ENCODE measurements at regions of chr12 and their contacts with region 1.

Region 1: DNA sequence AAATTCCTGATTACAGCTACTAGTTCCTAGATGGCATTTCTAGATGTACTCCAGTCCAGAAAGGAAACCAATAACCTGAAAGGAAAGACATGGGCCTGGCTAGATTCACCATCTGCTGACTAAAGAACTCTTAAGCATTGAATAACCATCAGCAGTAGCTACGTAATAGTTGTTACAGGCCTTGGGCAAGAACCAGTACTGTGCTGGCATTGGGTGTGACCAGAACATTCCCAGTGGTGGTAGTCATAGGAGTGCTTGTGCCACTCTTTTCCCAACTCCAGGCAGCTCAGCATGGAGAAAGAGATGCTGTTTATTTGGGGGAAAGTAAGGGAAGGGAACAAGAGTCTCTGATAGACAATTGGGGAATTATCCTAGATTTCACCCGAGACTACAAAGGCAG is 333.3 kb downstream of the SLC16A7 start:
- DNase-seq: peak; percentile 92
- H3K4me3 Mint-ChIP-seq: peak overlapping the region; percentile 50
- H3K27ac Mint-ChIP-seq: peak overlapping the region; percentile 95
- H3K4me1 Mint-ChIP-seq: peaks cover 33% of the 10 kb centered on the region
- H3K27me3 Mint-ChIP-seq: no peaks in the 10 kb centered on the region
- CTCF ChIP-seq: no peak

Region 2: DNA sequence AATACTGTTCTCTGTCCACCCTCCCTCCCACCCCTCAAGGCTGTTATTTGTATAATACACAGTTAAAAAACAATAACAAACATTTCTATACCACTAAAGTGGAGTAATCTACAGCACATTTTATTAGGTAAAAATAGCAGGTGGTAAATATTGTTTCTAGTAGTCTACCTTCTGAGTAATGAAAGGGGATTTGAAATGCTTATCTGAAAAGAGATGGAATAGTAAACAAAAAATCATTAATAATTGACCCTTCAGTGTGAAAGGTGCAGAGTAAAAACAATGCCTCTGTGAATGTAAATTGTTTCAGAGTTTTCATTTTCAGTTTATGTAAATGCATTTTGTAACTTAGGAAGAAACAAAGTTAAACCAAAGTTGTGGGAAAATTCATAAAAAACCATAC is 12.1 kb before region 1 on chr12:
- CTCF ChIA-PET with region 1: no interaction called
- POLR2A ChIA-PET with region 1: interaction called, 12 read pairs
- intact Hi-C with region 1: no loop called
- DNase-seq: no peak
- H3K4me3 Mint-ChIP-seq: no peak overlapping the region
- H3K27ac Mint-ChIP-seq: no peak overlapping the region
- H3K4me1 Mint-ChIP-seq: no peaks in the 10 kb centered on the region
- H3K27me3 Mint-ChIP-seq: no peaks in the 10 kb centered on the region
- CTCF ChIP-seq: no peak

Region 3: DNA sequence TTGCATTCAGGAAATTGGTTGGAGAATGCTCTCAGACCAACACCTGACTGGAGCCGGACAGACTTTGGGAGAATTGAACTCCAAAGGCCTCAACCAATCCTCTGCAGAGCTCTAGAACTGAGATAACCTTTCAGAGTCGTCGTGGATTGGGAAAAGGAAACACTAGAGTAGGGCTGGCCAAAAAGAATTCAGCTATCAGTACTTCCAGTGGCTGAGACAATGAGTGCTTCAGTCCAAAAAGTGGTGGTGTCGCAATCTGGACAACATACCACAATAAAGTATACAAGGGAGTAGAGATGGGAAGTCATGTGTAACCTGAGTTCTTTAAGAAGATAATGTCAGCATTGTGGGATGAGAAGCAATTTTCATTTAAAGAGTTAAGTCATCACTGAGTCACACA is 43.9 kb after region 1 on chr12:
- CTCF ChIA-PET with region 1: no interaction called
- POLR2A ChIA-PET with region 1: interaction called, 15 read pairs
- intact Hi-C with region 1: loop called (anchors 1 kb)
- DNase-seq: peak; percentile 81
- H3K4me3 Mint-ChIP-seq: no peak overlapping the region
- H3K27ac Mint-ChIP-seq: peak overlapping the region; percentile 44
- H3K4me1 Mint-ChIP-seq: peaks cover 20% of the 10 kb centered on the region
- H3K27me3 Mint-ChIP-seq: no peaks in the 10 kb centered on the region
- CTCF ChIP-seq: no peak

Region 4: DNA sequence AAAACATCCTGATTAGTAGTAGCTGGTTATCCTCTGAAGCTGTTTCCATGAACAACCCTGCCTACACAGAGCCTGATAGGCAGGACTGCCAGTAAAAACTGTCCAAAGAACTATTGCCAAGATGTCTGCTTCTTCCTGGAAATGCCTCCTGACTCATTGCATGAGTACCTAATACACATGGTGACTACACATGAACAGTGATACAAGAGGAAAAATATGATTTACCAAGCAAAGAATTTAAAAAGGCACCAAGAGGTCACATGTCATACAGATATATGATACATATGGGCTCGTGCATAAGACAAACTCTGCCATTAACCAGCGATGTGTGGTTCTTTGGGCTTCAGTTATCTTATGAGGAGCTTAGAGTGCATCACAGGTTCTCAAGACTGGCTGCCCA is 219.0 kb after region 1 on chr12:
- CTCF ChIA-PET with region 1: no interaction called
- POLR2A ChIA-PET with region 1: interaction called, 4 read pairs
- intact Hi-C with region 1: loop called (anchors 5 kb)
- DNase-seq: peak; percentile 77
- H3K4me3 Mint-ChIP-seq: no peak overlapping the region
- H3K27ac Mint-ChIP-seq: peak overlapping the region; percentile 79
- H3K4me1 Mint-ChIP-seq: peaks cover 27% of the 10 kb centered on the region
- H3K27me3 Mint-ChIP-seq: no peaks in the 10 kb centered on the region
- CTCF ChIP-seq: no peak

Measured in MCF 10A (cell line).